K562 (cell line): ENCODE measurements at regions of chr3 and their contacts with region 1.

Region 1: DNA sequence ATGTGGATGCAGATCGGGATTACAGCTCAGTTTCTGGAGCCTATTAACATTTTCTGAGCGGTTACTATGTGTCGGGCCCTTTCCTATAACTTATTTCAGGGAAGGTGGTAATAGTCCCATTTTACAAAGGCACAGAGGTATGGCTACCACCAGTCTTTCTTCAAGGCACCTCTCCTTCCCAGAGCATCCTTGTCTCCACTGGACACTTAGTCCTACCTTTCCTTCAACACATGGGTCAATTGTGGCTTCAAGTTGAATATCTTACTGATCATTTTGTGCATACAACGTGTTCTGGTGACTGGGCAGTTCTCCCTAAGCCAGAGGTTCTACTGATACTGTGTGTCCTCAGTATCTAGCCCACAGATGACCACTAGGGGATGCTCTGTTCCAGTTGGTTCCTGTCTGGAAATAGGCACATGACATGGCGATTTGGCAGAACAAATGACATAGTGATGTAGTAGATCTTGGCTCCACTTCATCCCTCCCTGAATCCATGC is 60.7 kb upstream of the CMTM8 start:
- DNase-seq: peak; percentile 67 to 80 (median 77)
- ATAC-seq: peak; percentile 98
- H3K4me3 ChIP-seq: no peak overlapping the region
- H3K27ac ChIP-seq: no peak overlapping the region
- H3K4me1 ChIP-seq: no peaks in the 10 kb centered on the region; a peak in 1 of 5 replicates
- H3K27me3 ChIP-seq: peaks cover 6% of the 10 kb centered on the region in 2 experiments
- CTCF ChIP-seq: peak; percentile 92 to 95 (median 92)
- EP300 ChIP-seq: no peak
- POLR2A ChIP-seq: no peak
- RAD21 ChIP-seq: peak; percentile 61 to 81

Region 2: DNA sequence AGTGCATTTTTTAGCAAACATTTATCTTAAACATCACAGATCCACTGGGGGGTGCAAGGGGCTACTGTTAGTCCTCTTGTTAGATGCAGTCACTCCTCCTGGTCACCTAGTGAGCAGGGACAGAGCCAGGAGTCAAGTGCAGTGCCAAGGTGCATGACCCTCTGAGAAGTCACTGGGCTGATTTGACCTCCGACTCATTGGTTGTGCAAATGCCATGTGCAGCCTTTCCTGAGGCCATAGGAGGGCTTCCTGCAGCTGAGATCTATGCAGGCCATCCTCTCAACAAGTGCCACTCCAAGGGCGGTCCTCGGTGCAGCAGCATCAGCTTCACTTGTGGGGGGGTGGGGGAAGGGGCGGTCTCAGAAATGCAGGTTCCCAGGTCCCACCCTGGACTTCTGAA is 11.1 kb before region 1 on chr3:
- CTCF ChIA-PET with region 1: no interaction called
- POLR2A ChIA-PET with region 1: no interaction called
- in situ Hi-C with region 1: no loop called
- intact Hi-C with region 1: no loop called
- DNase-seq: no peak
- ATAC-seq: no peak
- H3K4me3 ChIP-seq: no peak overlapping the region
- H3K27ac ChIP-seq: no peak overlapping the region
- H3K4me1 ChIP-seq: no peaks in the 10 kb centered on the region
- H3K27me3 ChIP-seq: no peaks in the 10 kb centered on the region
- CTCF ChIP-seq: no peak
- EP300 ChIP-seq: no peak
- POLR2A ChIP-seq: no peak
- RAD21 ChIP-seq: no peak

Region 3: DNA sequence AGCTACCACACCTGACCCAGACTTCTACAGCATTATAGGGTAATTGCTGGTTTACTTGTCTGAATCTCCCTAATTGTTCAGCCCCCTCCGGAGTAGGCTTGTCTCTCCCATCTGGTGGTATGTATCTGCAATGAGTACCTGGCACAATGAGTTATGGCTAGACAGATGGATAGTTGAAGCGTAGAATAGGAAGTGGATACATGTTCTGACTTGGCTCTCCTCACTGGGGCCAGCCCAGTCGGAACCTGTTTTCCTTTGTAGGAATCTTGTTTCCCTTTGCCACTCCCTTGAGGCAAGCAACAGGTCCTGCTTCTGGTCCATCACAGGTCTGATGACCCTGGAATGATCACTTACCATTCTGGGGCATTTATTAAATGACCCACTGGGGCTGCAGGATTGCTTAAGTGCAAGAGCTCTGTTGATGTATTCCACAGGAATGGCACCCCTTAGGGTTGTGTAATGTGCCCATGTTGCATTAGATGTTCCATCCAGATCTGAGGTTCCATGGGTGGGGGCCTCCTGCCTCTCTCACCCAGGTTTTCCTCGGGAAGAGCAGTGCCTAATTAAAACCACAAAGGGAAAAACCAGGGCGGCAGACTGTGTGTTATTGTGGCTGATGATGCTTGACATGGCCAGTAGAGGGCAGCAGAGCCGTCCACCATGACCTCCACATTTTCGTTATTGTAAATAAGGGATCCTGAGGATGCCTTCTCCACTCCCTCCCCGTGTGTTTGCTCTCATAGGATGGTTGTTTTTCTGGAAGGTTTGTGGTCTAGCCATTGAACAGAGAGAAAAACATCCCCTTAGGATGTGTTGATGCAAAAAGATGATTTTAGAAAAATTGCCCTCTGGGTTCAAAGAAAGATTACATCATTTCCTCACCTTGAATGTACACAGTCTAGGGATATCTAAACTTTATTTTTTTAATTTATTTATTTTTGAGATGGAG is 118.8 kb after region 1 on chr3:
- CTCF ChIA-PET with region 1: no interaction called
- POLR2A ChIA-PET with region 1: no interaction called
- in situ Hi-C with region 1: no loop called
- intact Hi-C with region 1: loop called (anchors 5 kb)
- DNase-seq: peak; percentile 73 to 85 (median 83)
- ATAC-seq: peak; percentile 98
- H3K4me3 ChIP-seq: no peak overlapping the region
- H3K27ac ChIP-seq: no peak overlapping the region
- H3K4me1 ChIP-seq: no peaks in the 10 kb centered on the region
- H3K27me3 ChIP-seq: peaks cover 2 to 11% of the 10 kb centered on the region in 2 experiments; a peak in 4 of 5 replicates
- CTCF ChIP-seq: peak; percentile 88 to 92 (median 91)
- EP300 ChIP-seq: no peak
- POLR2A ChIP-seq: no peak
- RAD21 ChIP-seq: peak; percentile 55 to 75

Region 4: DNA sequence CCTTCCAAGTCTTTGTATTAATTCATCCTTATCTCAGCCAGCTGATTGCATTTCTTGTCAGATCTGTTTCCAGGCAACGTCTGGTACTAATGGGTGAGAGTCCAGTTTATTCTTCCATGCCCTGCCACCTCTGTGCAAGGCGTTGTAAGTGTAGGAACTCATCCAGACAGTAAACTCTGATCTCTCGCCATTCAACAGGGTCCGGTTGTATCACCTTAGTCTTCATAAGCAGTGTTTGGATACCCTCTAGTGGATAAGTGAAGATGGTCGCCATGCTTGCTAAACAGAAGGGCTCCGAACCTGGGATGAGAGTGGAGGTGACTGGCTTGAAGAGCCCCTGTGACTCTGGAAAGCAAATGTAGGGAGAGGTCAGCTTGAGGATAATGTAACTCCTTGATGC is 162.3 kb after region 1 on chr3:
- CTCF ChIA-PET with region 1: interaction called, 3 read pairs
- POLR2A ChIA-PET with region 1: no interaction called
- in situ Hi-C with region 1: no loop called
- intact Hi-C with region 1: loop called (anchors 1 kb)
- DNase-seq: peak; percentile 43 to 58 (median 50)
- ATAC-seq: peak; percentile 93
- H3K4me3 ChIP-seq: no peak overlapping the region
- H3K27ac ChIP-seq: no peak overlapping the region
- H3K4me1 ChIP-seq: no peaks in the 10 kb centered on the region
- H3K27me3 ChIP-seq: peaks cover 7 to 12% of the 10 kb centered on the region in 2 experiments; a peak in 3 of 5 replicates
- CTCF ChIP-seq: peak; percentile 50 to 59 (median 56); a peak in 5 of 6 replicates
- EP300 ChIP-seq: no peak
- POLR2A ChIP-seq: no peak
- RAD21 ChIP-seq: peak; percentile 56 to 77

Region 5: DNA sequence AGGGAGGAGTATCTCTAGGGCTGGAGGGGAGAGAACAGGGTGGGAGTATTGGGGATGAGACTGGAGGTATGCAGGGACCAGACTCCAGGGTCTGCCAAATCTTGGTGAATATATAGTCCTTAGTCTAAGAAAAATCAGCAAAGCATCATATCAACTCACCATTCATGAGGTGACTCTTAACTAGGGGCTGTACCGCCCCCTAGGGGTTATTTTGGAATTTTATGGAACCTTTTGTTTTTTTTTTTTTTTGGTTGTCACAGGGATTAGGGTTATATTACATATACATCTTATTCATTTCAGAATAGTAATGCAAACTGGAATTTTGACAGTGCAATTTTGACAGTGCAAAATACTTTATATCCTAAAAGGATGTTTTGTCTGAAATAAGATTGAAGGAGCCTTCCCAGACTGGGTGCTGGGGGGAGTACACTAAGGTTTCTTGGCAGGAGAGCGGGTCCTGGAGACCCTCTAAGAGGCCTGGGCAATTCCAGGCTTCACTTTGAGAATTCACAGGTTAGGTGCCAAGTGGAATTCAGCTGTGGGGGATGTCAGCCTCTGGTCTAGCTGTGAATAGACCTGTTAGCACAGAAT is 221.4 kb after region 1 on chr3:
- CTCF ChIA-PET with region 1: interaction called, 4 read pairs
- POLR2A ChIA-PET with region 1: no interaction called
- in situ Hi-C with region 1: no loop called
- intact Hi-C with region 1: loop called (anchors 1 kb)
- DNase-seq: peak; percentile 51 to 68 (median 58)
- ATAC-seq: peak; percentile 77
- H3K4me3 ChIP-seq: no peak overlapping the region
- H3K27ac ChIP-seq: no peak overlapping the region
- H3K4me1 ChIP-seq: peaks cover 0 to 6% of the 10 kb centered on the region in 2 experiments; a peak in 1 of 5 replicates
- H3K27me3 ChIP-seq: peaks cover 24 to 39% of the 10 kb centered on the region in 2 experiments; a peak in 4 of 5 replicates
- CTCF ChIP-seq: peak; percentile 63 to 87 (median 67); a peak in 5 of 6 replicates
- EP300 ChIP-seq: no peak
- POLR2A ChIP-seq: no peak
- RAD21 ChIP-seq: peak; percentile 28 to 63; a peak in 3 of 4 replicates

Region 6: DNA sequence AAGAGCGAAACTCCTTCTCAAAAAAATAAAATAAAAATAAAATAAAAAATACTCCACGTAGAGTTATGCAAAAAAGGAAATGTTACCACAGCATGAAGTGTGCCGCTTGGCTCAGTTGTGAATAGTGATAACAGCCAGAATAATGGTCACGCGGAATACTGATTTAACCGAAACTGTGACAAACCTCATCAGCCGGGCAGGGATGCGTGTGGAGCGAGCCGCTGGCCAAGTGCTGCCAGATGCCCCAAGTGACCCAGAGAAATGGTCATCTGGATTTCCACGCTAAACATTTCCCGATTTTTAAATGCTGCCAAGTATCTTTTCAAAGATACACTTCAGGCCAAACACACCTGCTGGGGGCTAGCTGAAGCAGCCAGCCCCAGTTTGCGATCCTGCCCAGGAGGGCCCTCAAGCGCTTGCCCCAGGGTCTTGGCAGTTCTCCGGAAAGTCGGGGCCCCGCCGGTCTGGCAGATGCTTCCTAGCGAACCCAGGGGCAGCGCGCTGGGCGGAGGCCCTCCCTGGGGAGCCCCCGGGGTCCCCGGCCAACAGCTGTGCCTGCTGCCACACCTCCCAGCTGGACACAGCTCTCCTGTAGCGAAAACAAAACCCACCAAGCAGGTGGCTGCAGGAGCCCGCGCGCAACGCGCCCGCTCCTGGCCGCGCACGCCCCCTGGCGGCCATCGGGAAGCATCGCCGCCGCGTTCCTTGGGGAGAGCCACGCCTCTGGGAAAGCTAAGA is 289.8 kb after region 1 on chr3:
- CTCF ChIA-PET with region 1: no interaction called
- POLR2A ChIA-PET with region 1: no interaction called
- in situ Hi-C with region 1: no loop called
- intact Hi-C with region 1: loop called (anchors 10 kb)
- DNase-seq: peak; percentile 84 to 94 (median 89)
- ATAC-seq: peak; percentile 99
- H3K4me3 ChIP-seq: no peak overlapping the region
- H3K27ac ChIP-seq: no peak overlapping the region
- H3K4me1 ChIP-seq: peaks cover 0 to 7% of the 10 kb centered on the region in 2 experiments; a peak in 2 of 5 replicates
- H3K27me3 ChIP-seq: no peaks in the 10 kb centered on the region
- CTCF ChIP-seq: peak; percentile 92 to 97 (median 94)
- EP300 ChIP-seq: no peak
- POLR2A ChIP-seq: no peak
- RAD21 ChIP-seq: peak; percentile 63 to 90

Region 7: DNA sequence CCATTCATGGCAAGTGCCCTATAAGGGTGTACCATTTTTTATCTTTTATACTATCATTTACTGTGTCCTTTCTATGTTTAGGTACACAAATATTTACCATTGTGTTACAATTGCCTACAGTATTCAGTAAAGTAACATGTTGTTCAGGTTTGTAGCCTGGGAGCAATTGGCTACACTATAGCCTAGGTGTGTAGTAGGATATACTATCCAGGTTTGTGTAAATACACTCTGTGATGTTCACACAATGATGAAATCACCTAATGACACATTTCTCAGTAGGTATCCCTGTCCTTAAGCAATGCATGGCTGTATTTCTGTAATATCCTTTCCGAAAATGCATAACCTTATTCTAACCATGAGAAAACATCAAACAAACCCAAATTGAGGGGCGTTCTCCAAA is 489.4 kb after region 1 on chr3:
- CTCF ChIA-PET with region 1: interaction called, 3 read pairs
- POLR2A ChIA-PET with region 1: no interaction called
- in situ Hi-C with region 1: no loop called
- intact Hi-C with region 1: loop called (anchors 10 kb)
- DNase-seq: no peak
- ATAC-seq: no peak
- H3K4me3 ChIP-seq: no peak overlapping the region
- H3K27ac ChIP-seq: no peak overlapping the region
- H3K4me1 ChIP-seq: peaks cover 0 to 2% of the 10 kb centered on the region in 2 experiments; a peak in 1 of 5 replicates
- H3K27me3 ChIP-seq: 0 out of 5 replicates have a peak, but pooled peaks cover 0 to 2% of the 10 kb centered on the region in 2 experiments
- CTCF ChIP-seq: no peak
- EP300 ChIP-seq: no peak
- POLR2A ChIP-seq: no peak
- RAD21 ChIP-seq: no peak